Right lobe of liver (tissue), 6 donors: ENCODE measurements at regions of chr15 and their contacts with region 1.

Region 1: GRCh38 chr15:58977887-58978286 is 9.6 kb upstream of the RNF111 start:
- DNase-seq: no peak
- ATAC-seq: no peak
- H3K4me3 ChIP-seq: no peak overlapping the region
- H3K27ac ChIP-seq: no peak overlapping the region
- H3K4me1 ChIP-seq: peaks cover 0 to 4% (median 0%) of the 10 kb centered on the region in 4 donors
- H3K27me3 ChIP-seq: no peaks in the 10 kb centered on the region
- CTCF ChIP-seq: no peak
- POLR2A ChIP-seq: no peak

Region 2: GRCh38 chr15:59492389-59493377 is 514.8 kb after region 1 on chr15:
- intact Hi-C with region 1: loop called in 1 of 2 experiments (anchors 10 kb)
- DNase-seq: peak in 2 of 3 donors; percentile 40 to 63
- ATAC-seq: peak; percentile 97 to 100 (median 98)
- H3K4me3 ChIP-seq: no peak overlapping the region
- H3K27ac ChIP-seq: no peak overlapping the region
- H3K4me1 ChIP-seq: no peaks in the 10 kb centered on the region
- H3K27me3 ChIP-seq: no peaks in the 10 kb centered on the region
- CTCF ChIP-seq: peak; percentile 82 to 86 (median 85)
- POLR2A ChIP-seq: no peak